Panc1 (cell line): ENCODE measurements at regions of chr1 and their contacts with region 1.

Region 1: DNA sequence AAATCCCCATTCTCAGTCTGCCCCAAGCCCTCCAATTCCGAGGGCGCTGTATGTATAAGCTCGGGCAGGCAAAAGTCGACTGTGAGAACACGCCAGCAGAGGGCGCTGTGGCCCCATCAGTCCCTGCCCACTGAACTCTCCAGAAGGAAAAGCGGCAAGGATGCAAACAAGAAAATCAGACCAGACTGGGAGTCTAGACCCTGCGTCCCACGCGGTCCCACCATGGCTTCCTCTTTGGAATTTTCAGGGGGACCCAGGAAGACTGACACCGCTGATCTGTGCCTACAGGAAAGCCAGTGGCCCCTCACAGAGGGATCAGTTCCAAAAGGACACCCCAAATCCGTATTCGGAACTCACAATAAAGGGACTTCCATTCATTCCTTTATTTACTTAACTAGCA is 19.5 kb downstream of the TEX35 start:
- DNase-seq: no peak
- ATAC-seq: peak; percentile 78
- H3K4me3 ChIP-seq: no peak overlapping the region
- H3K27ac ChIP-seq: no peak overlapping the region
- H3K4me1 ChIP-seq: peaks cover 14% of the 10 kb centered on the region
- H3K27me3 ChIP-seq: no peaks in the 10 kb centered on the region
- CTCF ChIP-seq: peak; percentile 96

Region 2: DNA sequence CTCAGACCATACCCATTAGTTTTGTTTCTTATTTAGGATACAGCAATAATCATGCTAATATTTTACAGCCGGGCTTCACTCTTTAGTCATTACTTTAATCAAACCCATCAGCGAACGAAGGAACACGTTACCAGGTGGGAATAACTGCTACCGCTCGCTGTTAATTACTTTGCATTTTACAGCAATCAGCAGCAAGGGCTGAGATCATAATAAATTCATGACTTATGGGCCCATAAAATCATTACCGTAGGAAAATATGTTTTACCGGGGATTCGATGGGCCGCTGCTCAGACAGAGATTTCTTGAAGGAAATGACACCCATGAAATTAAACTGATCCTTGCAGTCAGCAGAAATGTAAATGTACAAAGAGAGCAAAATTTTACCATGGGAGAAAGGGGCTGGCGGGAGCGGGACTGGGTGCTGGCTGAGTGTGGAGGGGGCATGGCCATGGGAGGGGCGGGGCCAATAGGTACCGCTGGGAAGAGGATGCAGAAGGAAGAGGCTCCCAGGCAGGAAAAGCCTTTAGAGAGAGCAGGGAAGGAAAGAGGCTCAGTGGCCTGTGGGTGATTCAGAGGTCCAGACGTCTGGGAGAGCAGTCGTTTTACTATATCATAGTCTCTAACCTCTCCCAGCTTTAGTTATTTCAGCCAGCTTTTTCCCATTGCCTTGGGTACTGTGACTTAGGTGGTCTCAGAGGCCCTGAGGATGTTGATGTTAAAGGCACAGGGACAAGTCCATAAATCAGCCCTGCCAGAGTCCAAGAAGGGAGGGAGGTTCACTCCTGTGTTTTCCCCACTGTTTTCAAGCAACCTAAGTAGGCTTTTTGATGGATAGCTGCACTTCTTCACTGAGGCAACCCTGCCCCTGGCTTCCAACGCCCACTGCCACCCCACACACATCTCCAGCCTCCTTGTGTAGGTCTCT is 821.4 kb before region 1 on chr1:
- CTCF ChIA-PET with region 1: no interaction called
- POLR2A ChIA-PET with region 1: no interaction called
- in situ Hi-C with region 1: no loop called
- intact Hi-C with region 1: no loop called
- DNase-seq: no peak
- ATAC-seq: no peak
- H3K4me3 ChIP-seq: no peak overlapping the region
- H3K27ac ChIP-seq: no peak overlapping the region
- H3K4me1 ChIP-seq: no peaks in the 10 kb centered on the region
- H3K27me3 ChIP-seq: no peaks in the 10 kb centered on the region
- CTCF ChIP-seq: no peak

Region 3: DNA sequence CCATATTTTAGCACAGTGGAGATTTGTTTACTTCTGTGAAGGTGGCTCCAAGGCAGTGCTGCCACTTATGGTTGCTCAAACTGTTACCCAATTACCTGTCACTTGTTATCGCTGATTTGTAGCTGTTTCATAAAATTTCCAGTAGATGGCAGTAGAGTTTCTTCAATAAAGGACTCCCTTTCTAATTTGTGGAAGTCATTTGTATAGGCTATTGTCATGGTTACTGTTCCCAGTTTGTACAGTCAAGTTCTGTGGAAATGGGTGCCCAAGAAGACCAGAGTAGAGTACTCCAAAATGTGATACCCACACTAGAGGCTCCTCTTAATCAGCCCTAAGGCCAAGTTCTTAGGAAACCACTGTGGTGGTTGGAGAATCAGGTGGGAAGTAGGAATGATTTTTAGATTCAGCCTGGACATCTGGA is 221.7 kb before region 1 on chr1:
- CTCF ChIA-PET with region 1: no interaction called
- POLR2A ChIA-PET with region 1: interaction called, 8 read pairs
- in situ Hi-C with region 1: no loop called
- intact Hi-C with region 1: loop called (anchors 5 kb)
- DNase-seq: no peak
- ATAC-seq: peak; percentile 85
- H3K4me3 ChIP-seq: no peak overlapping the region
- H3K27ac ChIP-seq: no peak overlapping the region
- H3K4me1 ChIP-seq: peaks cover 12% of the 10 kb centered on the region
- H3K27me3 ChIP-seq: no peaks in the 10 kb centered on the region
- CTCF ChIP-seq: peak; percentile 73

Region 4: GRCh38 chr1:178885869-178886268 is 353.5 kb after region 1 on chr1:
- CTCF ChIA-PET with region 1: no interaction called
- POLR2A ChIA-PET with region 1: no interaction called
- in situ Hi-C with region 1: no loop called
- intact Hi-C with region 1: loop called (anchors 5 kb)
- DNase-seq: no peak
- ATAC-seq: no peak
- H3K4me3 ChIP-seq: no peak overlapping the region
- H3K27ac ChIP-seq: no peak overlapping the region
- H3K4me1 ChIP-seq: no peaks in the 10 kb centered on the region
- H3K27me3 ChIP-seq: no peaks in the 10 kb centered on the region
- CTCF ChIP-seq: peak; percentile 55; the same call in 1 of the 2 replicates